Heart right ventricle (tissue), 16 donors: ENCODE measurements at regions of chr5 and their contacts with region 1.

Region 1: GRCh38 chr5:93299681-93300308 is 281.2 kb downstream of the NR2F1-AS1 start:
- DNase-seq: no peak
- ATAC-seq: no peak
- H3K4me3 ChIP-seq: no peak overlapping the region
- H3K27ac ChIP-seq: no peak overlapping the region
- H3K4me1 ChIP-seq: peaks cover 0 to 12% (median 0%) of the 10 kb centered on the region in 9 donors
- H3K27me3 ChIP-seq: no peaks in the 10 kb centered on the region
- CTCF ChIP-seq: no peak

Region 2: GRCh38 chr5:93006915-93007314 is 292.9 kb before region 1 on chr5:
- intact Hi-C with region 1: no loop called
- DNase-seq: no peak
- ATAC-seq: no peak
- H3K4me3 ChIP-seq: no peak overlapping the region
- H3K27ac ChIP-seq: no peak overlapping the region
- H3K4me1 ChIP-seq: no peaks in the 10 kb centered on the region
- H3K27me3 ChIP-seq: no peaks in the 10 kb centered on the region
- CTCF ChIP-seq: no peak

Region 3: GRCh38 chr5:93371893-93372292 is 72.1 kb after region 1 on chr5:
- intact Hi-C with region 1: loop called in 1 of 10 experiments (anchors 2 kb)
- DNase-seq: no peak
- ATAC-seq: no peak
- H3K4me3 ChIP-seq: no peak overlapping the region
- H3K27ac ChIP-seq: no peak overlapping the region
- H3K4me1 ChIP-seq: no peaks in the 10 kb centered on the region
- H3K27me3 ChIP-seq: no peaks in the 10 kb centered on the region
- CTCF ChIP-seq: no peak